Activated naive CD4-positive, alpha-beta T cell treated with anti-CD3 and anti-CD28 coated beads for 36 hours (primary cell): ENCODE measurements at regions of chr1 and their contacts with region 1.

Region 1: DNA sequence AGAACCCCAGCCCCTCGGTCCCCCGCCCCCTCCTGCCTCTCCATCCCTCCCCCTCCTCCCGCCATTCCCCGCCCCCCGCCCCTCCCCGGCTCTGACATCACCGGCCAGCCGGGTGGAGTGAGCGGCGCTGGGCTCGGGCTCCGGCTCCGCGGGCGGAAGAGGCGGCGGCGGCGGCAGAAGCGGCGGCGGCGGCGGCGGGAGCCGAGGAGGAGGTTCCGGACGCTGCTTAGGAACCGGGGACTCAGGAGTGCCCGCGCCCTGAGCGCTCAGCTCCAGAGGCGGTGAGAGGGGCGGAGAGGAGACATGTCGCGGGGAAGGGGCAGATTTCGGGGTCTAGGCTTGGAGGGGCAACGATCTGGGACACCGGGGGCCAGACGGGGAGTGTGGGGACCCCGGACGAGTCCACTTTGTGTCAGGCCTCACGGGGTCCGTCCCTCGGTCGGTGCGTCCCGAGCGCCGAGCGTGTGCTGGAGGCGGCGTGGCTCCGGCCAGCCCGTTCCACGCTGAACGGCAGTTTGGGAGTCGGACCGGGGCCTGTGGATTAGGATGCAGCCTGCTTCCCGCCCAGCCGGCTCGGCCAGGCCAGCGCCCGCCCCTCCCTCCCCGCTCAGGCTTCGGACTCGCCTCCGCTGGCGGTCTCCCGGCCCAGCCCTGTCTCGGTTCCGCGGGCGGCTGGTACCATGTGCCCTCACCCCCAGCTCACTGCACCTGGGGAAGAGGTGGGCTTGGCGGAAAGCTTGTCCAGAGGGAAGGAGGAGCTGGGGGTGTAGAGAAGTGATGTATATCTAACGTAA is at the start of gene PEA15:
- DNase-seq: peak; percentile 79
- H3K4me3 Mint-ChIP-seq: peak within 1 kb of the TSS; percentile 85
- H3K27ac Mint-ChIP-seq: peak within 1 kb of the TSS; percentile 87
- H3K4me1 Mint-ChIP-seq: peaks cover 46% of the 10 kb centered on the region
- H3K27me3 Mint-ChIP-seq: no peaks in the 10 kb centered on the region
- total RNA-seq, gene PEA15: 34.3 to 42.0 TPM

Region 2: DNA sequence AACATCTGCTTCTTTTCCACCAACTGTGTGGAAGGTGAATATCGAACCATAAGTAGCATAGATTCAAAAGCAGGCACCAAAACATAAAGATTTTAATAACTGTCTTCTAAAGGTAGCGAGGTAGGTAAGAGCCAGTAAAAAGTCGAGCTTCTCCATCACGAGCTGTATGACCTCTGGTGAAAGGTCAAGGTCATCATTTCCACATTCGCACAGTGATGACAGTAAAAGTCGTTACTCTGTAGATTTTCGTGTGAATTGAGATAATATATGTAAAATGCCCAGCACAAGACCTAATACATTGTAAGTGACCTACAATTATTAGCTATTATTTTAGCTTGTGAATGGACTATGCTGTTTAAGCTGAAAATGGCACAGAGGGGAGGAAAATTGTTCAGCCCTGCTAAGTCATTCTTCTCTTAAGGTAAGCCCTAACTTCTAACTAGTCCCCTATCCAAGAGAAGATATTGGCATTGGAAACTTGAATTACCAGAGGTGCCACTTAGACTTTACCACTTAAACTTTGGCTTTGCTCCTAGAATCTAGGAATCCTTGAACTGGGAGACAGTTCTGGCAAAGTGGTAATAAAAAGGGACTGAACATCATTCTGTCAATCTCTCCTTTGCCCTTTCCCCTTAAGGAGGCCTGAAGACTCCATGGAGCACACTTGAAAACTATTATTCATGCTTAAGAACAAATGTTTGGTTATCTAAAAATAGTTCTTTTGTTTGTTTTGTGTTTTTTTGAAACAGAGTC is 45.8 kb before region 1 on chr1:
- CTCF ChIA-PET with region 1: no interaction called
- intact Hi-C with region 1: no loop called
- DNase-seq: no peak
- H3K4me3 Mint-ChIP-seq: no peak overlapping the region
- H3K27ac Mint-ChIP-seq: no peak overlapping the region
- H3K4me1 Mint-ChIP-seq: no peaks in the 10 kb centered on the region
- H3K27me3 Mint-ChIP-seq: no peaks in the 10 kb centered on the region

Region 3: DNA sequence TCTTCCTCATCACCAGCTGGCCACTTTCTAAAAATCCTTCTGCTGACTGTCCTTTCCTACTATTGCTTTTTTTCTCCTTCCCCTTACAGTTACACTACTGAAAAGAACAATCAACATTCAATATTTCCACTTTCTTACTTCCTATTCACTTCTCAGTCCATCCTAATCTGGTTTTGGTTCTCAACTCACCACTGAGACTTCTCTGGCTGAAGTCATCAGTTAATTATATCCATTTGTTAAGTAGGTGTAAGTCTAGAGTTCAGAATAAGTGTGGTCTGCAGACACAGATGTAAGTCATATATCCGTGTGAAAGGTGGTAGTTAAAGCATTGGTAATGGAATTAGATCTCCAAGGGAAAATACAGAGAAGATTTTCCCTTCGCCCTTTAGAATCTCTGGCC is 21.2 kb after region 1 on chr1:
- CTCF ChIA-PET with region 1: no interaction called
- intact Hi-C with region 1: no loop called
- DNase-seq: no peak
- H3K4me3 Mint-ChIP-seq: no peak overlapping the region
- H3K27ac Mint-ChIP-seq: no peak overlapping the region
- H3K4me1 Mint-ChIP-seq: no peaks in the 10 kb centered on the region
- H3K27me3 Mint-ChIP-seq: no peaks in the 10 kb centered on the region

Region 4: GRCh38 chr1:160244209-160244608 is 38.8 kb after region 1 on chr1:
- CTCF ChIA-PET with region 1: no interaction called
- intact Hi-C with region 1: no loop called
- DNase-seq: no peak
- H3K4me3 Mint-ChIP-seq: no peak overlapping the region
- H3K27ac Mint-ChIP-seq: no peak overlapping the region
- H3K4me1 Mint-ChIP-seq: peaks cover 12% of the 10 kb centered on the region
- H3K27me3 Mint-ChIP-seq: no peaks in the 10 kb centered on the region

Region 5: GRCh38 chr1:160284782-160285344 is 79.4 kb after region 1 on chr1 and contains the start of gene PEX19:
- CTCF ChIA-PET with region 1: interaction called, 5 read pairs
- intact Hi-C with region 1: loop called (anchors 1 kb)
- DNase-seq: peak; percentile 97
- H3K4me3 Mint-ChIP-seq: peak within 1 kb of the TSS; percentile 98
- H3K27ac Mint-ChIP-seq: peak within 1 kb of the TSS; percentile 87
- H3K4me1 Mint-ChIP-seq: peaks cover 18% of the 10 kb centered on the region
- H3K27me3 Mint-ChIP-seq: no peaks in the 10 kb centered on the region
- total RNA-seq, gene PEX19: 58.3 to 65.4 TPM